IMR-90 (cell line): ENCODE measurements at regions of chr6 and their contacts with region 1.

Region 1: GRCh38 chr6:158143700-158144099 is 24.4 kb downstream of the SERAC1 start:
- DNase-seq: peak; percentile 7
- ATAC-seq: no peak
- H3K4me3 ChIP-seq: no peak overlapping the region
- H3K27ac ChIP-seq: no peak overlapping the region
- H3K4me1 ChIP-seq: no peaks in the 10 kb centered on the region; the same call in 1 of the 2 replicates
- H3K27me3 ChIP-seq: no peaks in the 10 kb centered on the region
- CTCF ChIP-seq: peak; percentile 27
- POLR2A ChIP-seq: no peak
- RAD21 ChIP-seq: no peak

Region 2: DNA sequence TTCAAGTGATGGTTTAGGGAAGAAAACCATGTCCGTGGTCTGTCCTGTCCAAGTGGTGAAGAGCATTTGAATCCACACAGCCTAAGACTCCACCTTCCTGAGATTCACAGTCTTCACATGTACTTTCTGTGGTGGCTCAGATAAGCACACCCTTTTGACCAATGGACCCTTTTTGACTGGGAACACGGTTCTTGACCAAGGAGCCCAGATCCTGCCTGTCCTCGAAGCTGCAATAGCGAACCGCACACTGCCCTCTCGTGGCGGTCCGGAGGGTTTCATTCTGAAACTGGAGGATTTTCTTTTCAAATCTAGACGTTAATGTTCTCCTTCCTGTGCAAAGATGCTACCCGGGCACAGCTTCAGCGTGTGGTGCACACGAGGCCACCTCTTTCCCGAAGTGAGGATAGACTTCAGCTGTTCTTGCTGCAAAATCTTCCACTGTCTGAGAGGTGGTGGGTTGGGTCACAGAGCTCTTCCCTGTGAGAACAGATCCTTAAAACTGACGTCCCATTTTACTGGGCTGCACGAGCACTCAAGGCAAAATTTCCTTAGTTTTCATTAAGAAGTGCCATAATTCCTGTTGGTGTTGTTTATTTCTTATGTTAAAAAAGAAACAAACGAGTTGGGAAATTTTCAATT is 71.5 kb before region 1 on chr6:
- CTCF ChIA-PET with region 1: no interaction called
- POLR2A ChIA-PET with region 1: no interaction called
- dilution Hi-C with region 1: no loop called
- in situ Hi-C with region 1: no loop called
- intact Hi-C with region 1: no loop called
- DNase-seq: peak; percentile 76
- ATAC-seq: peak; percentile 76
- H3K4me3 ChIP-seq: no peak overlapping the region
- H3K27ac ChIP-seq: peak overlapping the region; percentile 30; the same call in 1 of the 2 replicates
- H3K4me1 ChIP-seq: peaks cover 17% of the 10 kb centered on the region
- H3K27me3 ChIP-seq: no peaks in the 10 kb centered on the region
- CTCF ChIP-seq: peak; percentile 84
- POLR2A ChIP-seq: peak; percentile 47; the same call in 1 of the 2 replicates
- RAD21 ChIP-seq: peak; percentile 95

Region 3: DNA sequence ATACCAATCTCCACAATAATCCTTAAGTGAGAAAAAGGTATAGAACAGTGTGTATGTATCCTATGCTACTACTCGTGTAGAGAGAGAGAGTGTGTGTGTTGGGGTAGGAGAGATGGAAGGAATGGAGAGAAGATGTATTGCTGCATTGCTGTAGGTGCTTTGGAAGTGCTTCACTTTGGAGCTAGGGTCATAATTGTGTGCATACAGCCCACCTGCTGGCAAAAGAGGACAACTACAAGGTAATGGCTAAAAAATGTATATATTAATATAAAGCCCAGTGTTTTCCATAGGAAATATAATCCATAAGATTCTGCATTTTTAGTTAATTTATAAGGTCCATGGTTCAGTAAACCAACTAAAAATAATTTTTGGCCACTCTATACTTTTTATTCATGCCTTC is 11.8 kb before region 1 on chr6:
- CTCF ChIA-PET with region 1: interaction called, 11 read pairs
- POLR2A ChIA-PET with region 1: no interaction called
- dilution Hi-C with region 1: no loop called
- in situ Hi-C with region 1: no loop called
- intact Hi-C with region 1: no loop called
- DNase-seq: peak; percentile 34
- ATAC-seq: peak; percentile 72
- H3K4me3 ChIP-seq: no peak overlapping the region
- H3K27ac ChIP-seq: no peak overlapping the region
- H3K4me1 ChIP-seq: no peaks in the 10 kb centered on the region
- H3K27me3 ChIP-seq: no peaks in the 10 kb centered on the region
- CTCF ChIP-seq: peak; percentile 42
- POLR2A ChIP-seq: no peak
- RAD21 ChIP-seq: peak; percentile 59

Region 4: DNA sequence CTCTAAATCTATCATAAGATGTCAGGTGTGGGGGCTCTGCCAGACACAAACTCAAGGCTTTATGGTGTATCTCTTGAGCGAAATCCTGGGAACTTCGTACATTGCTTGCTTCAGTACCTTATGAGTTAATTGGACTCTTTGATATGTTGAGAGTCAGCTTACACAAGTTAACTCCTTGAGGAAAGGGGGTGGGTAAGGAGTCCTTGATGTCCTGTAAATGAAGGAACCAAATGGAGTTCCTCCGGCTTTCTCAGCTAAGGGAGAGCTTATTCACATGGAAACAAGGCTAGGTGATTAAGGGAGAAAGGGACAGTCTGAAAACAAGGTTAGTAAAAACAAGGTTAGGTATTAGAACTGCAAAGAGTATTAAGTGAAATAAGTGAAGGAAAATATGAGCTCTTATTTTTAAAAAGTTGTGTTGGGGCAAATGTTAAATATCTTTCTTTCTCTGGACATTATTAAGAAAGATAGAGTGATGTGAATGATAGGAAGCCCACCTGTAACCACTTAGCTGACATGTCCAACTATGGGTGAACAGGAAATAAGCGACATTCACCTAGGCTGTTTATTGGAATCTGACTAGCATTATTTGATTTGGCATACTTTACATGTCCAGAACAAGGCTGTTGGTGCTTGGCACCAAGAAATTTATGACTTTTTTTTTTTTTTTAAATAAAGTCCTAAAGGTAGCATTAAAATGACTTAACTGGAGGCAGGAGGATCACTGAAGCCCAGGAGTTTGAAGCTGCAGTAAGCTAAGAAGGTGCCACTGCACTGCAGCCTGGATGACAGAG is 51.0 kb after region 1 on chr6:
- CTCF ChIA-PET with region 1: no interaction called
- POLR2A ChIA-PET with region 1: no interaction called
- dilution Hi-C with region 1: no loop called
- in situ Hi-C with region 1: no loop called
- intact Hi-C with region 1: no loop called
- DNase-seq: no peak
- ATAC-seq: no peak
- H3K4me3 ChIP-seq: no peak overlapping the region
- H3K27ac ChIP-seq: no peak overlapping the region
- H3K4me1 ChIP-seq: no peaks in the 10 kb centered on the region
- H3K27me3 ChIP-seq: no peaks in the 10 kb centered on the region
- CTCF ChIP-seq: no peak
- POLR2A ChIP-seq: no peak
- RAD21 ChIP-seq: no peak

Region 5: GRCh38 chr6:158205169-158205944 is 61.7 kb after region 1 on chr6:
- CTCF ChIA-PET with region 1: no interaction called
- POLR2A ChIA-PET with region 1: no interaction called
- dilution Hi-C with region 1: no loop called
- in situ Hi-C with region 1: no loop called
- intact Hi-C with region 1: no loop called
- DNase-seq: no peak
- ATAC-seq: no peak
- H3K4me3 ChIP-seq: no peak overlapping the region
- H3K27ac ChIP-seq: no peak overlapping the region
- H3K4me1 ChIP-seq: peaks cover 3% of the 10 kb centered on the region; the same call in 1 of the 2 replicates
- H3K27me3 ChIP-seq: no peaks in the 10 kb centered on the region
- CTCF ChIP-seq: peak; percentile 37
- POLR2A ChIP-seq: no peak
- RAD21 ChIP-seq: peak; percentile 42